Activated CD4-positive, alpha-beta memory T cell treated with anti-CD3 and anti-CD28 coated beads for 36 hours (primary cell): ENCODE measurements at regions of chr10 and their contacts with region 1.

Region 1: GRCh38 chr10:132536971-132537712 is 445 bp upstream of the INPP5A start:
- DNase-seq: peak; percentile 100
- H3K4me3 Mint-ChIP-seq: peak overlapping the region; percentile 61
- H3K27ac Mint-ChIP-seq: no peak overlapping the region
- H3K4me1 Mint-ChIP-seq: peaks cover 46% of the 10 kb centered on the region
- H3K27me3 Mint-ChIP-seq: peaks cover 2% of the 10 kb centered on the region

Region 2: DNA sequence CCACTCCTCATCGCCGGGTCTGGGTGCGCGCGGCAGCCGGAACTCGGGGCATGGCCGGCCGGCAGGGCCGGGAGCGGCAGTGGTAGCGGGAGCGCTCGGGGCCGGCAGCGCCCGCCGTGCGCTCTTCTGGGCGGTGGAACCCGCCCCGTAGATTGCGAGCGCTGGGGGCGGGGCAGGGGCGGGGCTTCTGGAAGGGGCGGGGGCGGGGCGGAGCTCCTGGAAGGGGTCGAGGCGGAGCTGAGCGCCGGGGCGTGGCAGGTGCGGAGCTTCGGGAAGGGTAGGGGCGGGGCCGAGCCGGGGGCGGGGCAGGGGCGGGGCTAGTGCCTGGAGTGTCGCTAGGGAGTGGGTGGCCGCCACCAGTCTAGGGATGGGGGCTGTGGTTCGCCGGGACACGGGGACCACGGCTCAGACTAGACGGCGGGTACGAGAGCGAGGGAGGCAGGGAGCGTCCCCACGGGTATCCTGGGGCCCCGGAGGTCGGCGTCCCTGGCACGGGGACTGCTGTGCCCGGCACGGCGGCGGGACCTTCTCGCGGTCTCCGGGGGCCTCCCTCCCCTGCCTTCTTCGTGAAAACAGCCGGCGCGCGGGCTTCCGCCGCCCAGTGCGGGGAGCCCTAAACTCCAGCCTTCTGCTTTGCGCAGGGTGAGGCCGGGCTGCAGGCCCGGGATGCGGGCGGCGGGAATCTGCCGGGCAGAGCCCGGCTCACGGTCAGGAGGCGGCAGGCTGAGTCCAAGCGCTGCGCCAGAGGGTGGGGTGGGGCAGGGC is 229.1 kb before region 1 on chr10 and contains the start of gene STK32C:
- CTCF ChIA-PET with region 1: no interaction called
- POLR2A ChIA-PET with region 1: no interaction called
- intact Hi-C with region 1: loop called (anchors 1 kb)
- DNase-seq: peak; percentile 93
- H3K4me3 Mint-ChIP-seq: peak within 1 kb of the TSS; percentile 85
- H3K27ac Mint-ChIP-seq: no peak within 1 kb of the TSS
- H3K4me1 Mint-ChIP-seq: peaks cover 11% of the 10 kb centered on the region
- H3K27me3 Mint-ChIP-seq: peaks cover 3% of the 10 kb centered on the region
- total RNA-seq, gene STK32C: 14.8 to 16.1 TPM

Region 3: GRCh38 chr10:132387764-132388210 is 149.4 kb before region 1 on chr10:
- CTCF ChIA-PET with region 1: no interaction called
- POLR2A ChIA-PET with region 1: no interaction called
- intact Hi-C with region 1: loop called (anchors 5 kb)
- DNase-seq: peak; percentile 81
- H3K4me3 Mint-ChIP-seq: peak overlapping the region; percentile 60
- H3K27ac Mint-ChIP-seq: peak overlapping the region; percentile 79
- H3K4me1 Mint-ChIP-seq: peaks cover 3% of the 10 kb centered on the region
- H3K27me3 Mint-ChIP-seq: peaks cover 2% of the 10 kb centered on the region

Region 4: GRCh38 chr10:132482090-132482800 is 54.9 kb before region 1 on chr10:
- CTCF ChIA-PET with region 1: no interaction called
- POLR2A ChIA-PET with region 1: no interaction called
- intact Hi-C with region 1: no loop called
- DNase-seq: no peak
- H3K4me3 Mint-ChIP-seq: no peak overlapping the region
- H3K27ac Mint-ChIP-seq: no peak overlapping the region
- H3K4me1 Mint-ChIP-seq: no peaks in the 10 kb centered on the region
- H3K27me3 Mint-ChIP-seq: peaks cover 6% of the 10 kb centered on the region

Region 5: GRCh38 chr10:132571650-132572535 is 34.8 kb after region 1 on chr10:
- CTCF ChIA-PET with region 1: no interaction called
- POLR2A ChIA-PET with region 1: interaction called, 4 read pairs
- intact Hi-C with region 1: loop called (anchors 1 kb)
- DNase-seq: peak; percentile 91
- H3K4me3 Mint-ChIP-seq: no peak overlapping the region
- H3K27ac Mint-ChIP-seq: peak overlapping the region; percentile 28
- H3K4me1 Mint-ChIP-seq: peaks cover 23% of the 10 kb centered on the region
- H3K27me3 Mint-ChIP-seq: no peaks in the 10 kb centered on the region

Region 6: DNA sequence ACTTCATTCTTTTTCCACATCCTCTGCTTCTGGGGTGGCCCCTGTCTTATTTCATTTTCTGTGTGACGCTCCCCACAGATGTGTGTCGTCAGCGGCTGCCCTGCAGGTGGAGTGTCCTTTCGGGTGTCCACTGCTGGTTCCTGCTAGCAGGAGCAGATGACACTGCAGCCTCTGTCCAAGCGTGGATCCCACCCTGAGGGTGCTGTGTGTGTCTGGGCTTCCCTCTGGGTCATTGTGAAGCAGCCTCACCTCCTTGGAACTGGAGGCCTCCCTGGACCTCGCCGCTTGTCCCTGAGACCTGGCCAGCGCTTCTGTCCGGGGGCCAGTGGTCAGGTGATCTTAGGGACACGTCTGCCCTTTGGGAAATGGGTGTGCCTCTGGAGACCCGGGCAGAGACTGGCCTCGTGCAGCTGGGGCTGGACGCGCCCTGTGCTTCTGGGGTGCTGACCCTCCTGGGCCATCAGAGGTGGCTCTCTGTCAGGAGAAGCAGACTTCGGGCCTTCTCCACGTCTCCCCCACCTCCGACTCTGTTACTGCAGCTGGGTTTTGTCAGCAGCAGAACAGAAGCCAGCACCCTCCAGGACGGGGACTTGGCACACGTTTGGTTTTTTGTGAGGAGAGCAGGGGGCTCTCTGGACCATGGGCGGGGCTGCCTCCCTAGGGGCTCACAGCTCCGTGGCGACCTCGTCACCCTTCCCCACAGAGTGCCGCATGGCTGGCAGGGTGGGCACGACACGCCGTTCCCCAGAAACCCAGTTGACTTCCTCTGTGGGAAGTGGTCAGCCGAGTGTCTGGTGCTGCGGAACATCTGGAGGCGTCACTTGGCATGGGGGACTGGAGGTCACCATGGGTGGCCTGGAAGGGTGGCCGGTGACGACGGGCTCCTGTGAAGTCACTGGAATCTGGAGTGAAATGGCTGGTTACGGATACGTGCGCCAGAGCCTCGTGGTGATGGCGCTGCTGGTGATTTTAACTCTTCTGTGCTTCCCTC is 48.9 kb after region 1 on chr10:
- CTCF ChIA-PET with region 1: no interaction called
- POLR2A ChIA-PET with region 1: no interaction called
- intact Hi-C with region 1: no loop called
- DNase-seq: no peak
- H3K4me3 Mint-ChIP-seq: no peak overlapping the region
- H3K27ac Mint-ChIP-seq: no peak overlapping the region
- H3K4me1 Mint-ChIP-seq: peaks cover 30% of the 10 kb centered on the region
- H3K27me3 Mint-ChIP-seq: no peaks in the 10 kb centered on the region

Region 7: DNA sequence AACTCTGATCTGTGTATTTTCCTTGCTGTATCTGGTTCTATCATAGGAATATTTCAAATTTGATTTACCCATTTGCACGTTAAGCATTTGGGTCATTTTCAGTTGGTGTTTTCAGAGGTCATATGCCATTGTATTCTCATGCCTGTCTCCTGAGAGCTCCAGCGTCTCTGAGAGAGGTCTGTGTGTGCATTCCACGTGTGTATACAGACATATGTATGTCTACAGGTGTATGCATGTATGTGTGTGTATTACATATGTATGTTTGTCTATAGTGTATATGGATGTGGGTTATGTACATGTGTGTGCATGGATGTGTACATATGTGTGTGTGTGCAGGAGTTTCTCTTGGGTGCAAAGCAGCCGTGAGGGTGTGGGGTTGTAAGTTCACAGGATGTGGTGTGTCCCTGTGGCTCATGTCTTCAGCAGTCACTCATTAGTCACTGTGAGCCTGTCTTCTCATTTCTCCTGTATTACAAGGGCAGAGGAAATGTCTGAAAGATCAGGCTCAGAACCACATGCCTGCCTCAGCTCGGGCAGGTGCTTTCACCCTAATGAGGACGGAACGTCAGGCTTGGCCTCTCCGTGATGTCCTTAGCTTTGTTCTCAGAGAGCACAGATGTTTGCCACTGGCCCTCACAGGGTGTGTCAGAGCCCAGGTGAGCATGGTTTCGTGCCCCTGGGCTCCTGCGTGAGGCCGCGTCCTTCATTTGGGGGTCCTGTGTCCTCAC is 147.2 kb after region 1 on chr10:
- CTCF ChIA-PET with region 1: no interaction called
- POLR2A ChIA-PET with region 1: no interaction called
- intact Hi-C with region 1: loop called (anchors 1 kb)
- DNase-seq: peak; percentile 69
- H3K4me3 Mint-ChIP-seq: no peak overlapping the region
- H3K27ac Mint-ChIP-seq: peak overlapping the region; percentile 49
- H3K4me1 Mint-ChIP-seq: peaks cover 15% of the 10 kb centered on the region
- H3K27me3 Mint-ChIP-seq: no peaks in the 10 kb centered on the region